ENCODE measurements at regions of chr2 and their contacts with region 1.

Region 1: GRCh38 chr2:156589381-156590079 is 153.4 kb downstream of the GPD2 start:
- DNase-seq: no peak
- ATAC-seq: peak; percentile 60
- H3K4me3 Mint-ChIP-seq: no peak overlapping the region
- H3K27ac Mint-ChIP-seq: no peak overlapping the region
- H3K4me1 Mint-ChIP-seq: peaks cover 5% of the 10 kb centered on the region
- H3K27me3 Mint-ChIP-seq: no peaks in the 10 kb centered on the region

Region 2: DNA sequence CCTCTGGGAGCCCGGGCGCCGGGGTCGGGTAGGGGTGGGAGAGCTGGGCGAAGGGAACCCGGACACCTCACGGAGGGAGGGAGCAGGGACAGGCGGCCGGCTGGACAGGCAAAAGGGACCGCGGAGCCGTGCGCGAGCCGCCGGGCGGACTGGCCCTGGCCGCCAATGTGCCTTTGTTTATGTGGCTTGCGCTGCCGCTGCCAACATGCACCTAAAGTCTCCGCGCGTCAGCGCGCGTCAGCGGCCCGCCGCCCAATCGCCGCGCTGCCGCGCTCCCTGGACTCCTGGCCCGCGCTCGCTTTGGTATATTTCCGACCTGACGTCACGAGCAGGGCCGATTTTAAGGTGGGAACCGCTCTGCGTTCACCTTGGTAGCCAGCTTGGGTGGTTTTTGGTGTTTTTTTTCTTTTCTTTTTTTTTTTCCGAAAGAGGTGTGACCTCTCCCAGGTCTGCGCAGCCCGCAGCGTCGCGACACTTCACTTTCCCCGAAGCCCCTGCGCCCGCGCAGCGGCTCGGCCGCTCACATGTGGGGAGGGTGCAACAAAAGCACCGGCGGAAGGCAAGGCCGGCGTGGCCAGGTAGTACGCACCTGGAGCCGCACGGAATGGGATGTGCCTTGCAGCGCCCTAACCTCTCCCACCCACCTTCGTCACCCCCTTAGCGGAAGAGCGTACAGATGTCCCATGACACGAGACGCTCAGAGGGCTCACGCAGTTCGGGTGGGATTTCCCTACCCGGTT is 256.8 kb before region 1 on chr2 and contains the start of gene NR4A2:
- CTCF ChIA-PET with region 1: interaction called, 26 read pairs
- DNase-seq: peak; percentile 91
- ATAC-seq: peak; percentile 70
- H3K4me3 Mint-ChIP-seq: peak within 1 kb of the TSS; percentile 89
- H3K27ac Mint-ChIP-seq: peak within 1 kb of the TSS; percentile 91
- H3K4me1 Mint-ChIP-seq: peaks cover 33% of the 10 kb centered on the region
- H3K27me3 Mint-ChIP-seq: peaks cover 29% of the 10 kb centered on the region
- total RNA-seq, gene NR4A2: 3.2 to 14.8 TPM

Region 3: GRCh38 chr2:156400706-156401678 is 188.5 kb before region 1 on chr2:
- CTCF ChIA-PET with region 1: interaction called, 12 read pairs
- DNase-seq: peak; percentile 83
- ATAC-seq: peak; percentile 79
- H3K4me3 Mint-ChIP-seq: peak overlapping the region; percentile 83
- H3K27ac Mint-ChIP-seq: peak overlapping the region; percentile 91
- H3K4me1 Mint-ChIP-seq: peaks cover 31% of the 10 kb centered on the region
- H3K27me3 Mint-ChIP-seq: no peaks in the 10 kb centered on the region

Region 4: GRCh38 chr2:156672556-156673332 is 83.2 kb after region 1 on chr2:
- CTCF ChIA-PET with region 1: no interaction called
- DNase-seq: no peak
- ATAC-seq: no peak
- H3K4me3 Mint-ChIP-seq: no peak overlapping the region
- H3K27ac Mint-ChIP-seq: no peak overlapping the region
- H3K4me1 Mint-ChIP-seq: no peaks in the 10 kb centered on the region
- H3K27me3 Mint-ChIP-seq: peaks cover 1% of the 10 kb centered on the region

Measured in activated CD8-positive, alpha-beta memory T cell treated with anti-CD3 and anti-CD28 coated beads, Interleukin-2, amount 10 ng/mL, durations not matched to agents 7 days and 5 days (primary cell).